ENCODE measurements at regions of chr6 and their contacts with region 1.

Region 1: DNA sequence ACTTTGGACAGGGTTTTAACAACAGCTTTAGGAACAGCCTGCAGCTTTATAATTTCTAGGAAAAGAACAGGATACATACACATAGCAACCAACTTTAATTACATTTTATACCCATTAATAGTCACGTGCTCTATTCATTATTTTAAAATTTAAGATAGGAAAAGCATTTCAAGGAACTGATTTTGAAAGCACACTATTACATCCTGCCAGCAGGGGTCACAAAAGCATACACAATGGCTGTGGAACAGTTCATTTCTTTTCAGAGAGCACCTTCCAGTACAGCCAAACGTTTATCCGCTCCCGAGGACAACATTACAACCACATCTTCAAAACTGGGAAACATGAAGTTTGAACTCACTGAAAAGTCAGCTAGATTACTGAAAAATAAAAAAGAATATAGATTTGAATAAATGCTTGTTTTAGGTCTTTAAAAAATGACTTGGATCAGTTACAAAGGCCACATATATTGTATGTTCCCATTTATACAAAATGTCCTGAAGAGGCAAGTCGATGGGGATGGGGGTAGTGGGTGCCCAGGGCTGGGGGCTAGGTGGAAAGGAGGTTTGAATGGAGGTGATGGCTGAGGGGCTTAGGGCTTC is 104.6 kb upstream of the EXOC2 start:
- DNase-seq: peak; percentile 52
- H3K4me3 ChIP-seq: no peak overlapping the region
- H3K27ac ChIP-seq: no peak overlapping the region
- H3K4me1 ChIP-seq: no peaks in the 10 kb centered on the region
- CTCF ChIP-seq: peak; percentile 93

Region 2: GRCh38 chr6:733431-734219 is 64.0 kb before region 1 on chr6:
- CTCF ChIA-PET with region 1: no interaction called
- POLR2A ChIA-PET with region 1: no interaction called
- intact Hi-C with region 1: no loop called
- DNase-seq: no peak
- H3K4me3 ChIP-seq: no peak overlapping the region
- H3K27ac ChIP-seq: no peak overlapping the region
- H3K4me1 ChIP-seq: no peaks in the 10 kb centered on the region
- CTCF ChIP-seq: no peak

Region 3: GRCh38 chr6:1381481-1382330 is 584.1 kb after region 1 on chr6:
- CTCF ChIA-PET with region 1: no interaction called
- POLR2A ChIA-PET with region 1: no interaction called
- intact Hi-C with region 1: loop called (anchors 2 kb)
- DNase-seq: peak; percentile 37
- H3K4me3 ChIP-seq: no peak overlapping the region
- H3K27ac ChIP-seq: no peak overlapping the region
- H3K4me1 ChIP-seq: no peaks in the 10 kb centered on the region
- CTCF ChIP-seq: peak; percentile 78

Region 4: DNA sequence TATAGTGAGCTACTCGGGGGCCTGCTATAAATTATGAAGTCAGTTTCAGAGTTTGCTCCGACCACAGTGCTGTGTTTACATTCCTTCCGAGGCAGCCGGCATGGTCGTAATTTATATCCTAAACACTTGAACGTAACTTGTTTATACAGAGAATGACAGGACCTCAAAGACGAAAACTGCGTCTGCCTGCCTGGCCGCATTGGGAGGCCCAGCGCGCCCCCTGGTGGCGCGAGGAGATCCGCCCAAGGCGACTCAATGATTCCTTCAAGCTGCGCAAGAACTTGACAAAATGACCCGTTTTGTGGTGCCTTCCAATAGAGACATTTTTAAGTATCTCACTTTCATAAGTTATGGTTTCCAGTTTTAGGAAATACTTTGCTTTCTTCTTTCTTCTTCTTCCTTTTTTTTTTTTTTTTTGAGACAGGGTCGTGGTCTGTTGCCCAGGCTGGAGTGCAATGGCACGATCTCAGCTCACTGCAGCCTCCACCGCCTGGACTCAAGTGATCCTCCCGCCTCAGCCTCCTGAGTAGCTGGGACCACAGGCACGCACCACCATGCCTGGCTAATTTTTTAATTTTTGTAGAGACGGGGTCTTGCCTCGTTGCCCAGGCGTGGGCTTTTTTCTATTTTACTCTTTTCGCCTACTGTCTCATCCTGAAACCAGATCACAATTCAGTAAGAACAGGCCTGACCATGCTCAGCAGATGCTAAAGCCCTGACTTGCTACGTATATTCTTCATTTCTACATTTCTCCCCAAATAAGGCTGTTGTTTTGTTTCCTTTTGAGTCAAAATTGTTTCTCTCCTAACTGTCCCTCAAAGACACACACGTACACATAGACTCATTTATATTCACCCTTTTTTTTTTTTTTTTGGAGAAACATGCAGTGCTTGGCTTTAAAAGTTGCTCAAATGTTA is 599.6 kb after region 1 on chr6:
- CTCF ChIA-PET with region 1: no interaction called
- POLR2A ChIA-PET with region 1: no interaction called
- intact Hi-C with region 1: loop called (anchors 5 kb)
- DNase-seq: peak; percentile 65
- H3K4me3 ChIP-seq: no peak overlapping the region
- H3K27ac ChIP-seq: no peak overlapping the region
- H3K4me1 ChIP-seq: no peaks in the 10 kb centered on the region
- CTCF ChIP-seq: peak; percentile 95

Region 5: GRCh38 chr6:1407499-1407990 is 610.0 kb after region 1 on chr6:
- CTCF ChIA-PET with region 1: no interaction called
- POLR2A ChIA-PET with region 1: no interaction called
- intact Hi-C with region 1: no loop called
- DNase-seq: no peak
- H3K4me3 ChIP-seq: no peak overlapping the region
- H3K27ac ChIP-seq: no peak overlapping the region
- H3K4me1 ChIP-seq: no peaks in the 10 kb centered on the region
- CTCF ChIP-seq: no peak

Measured in OCI-LY7 (cell line).